WTC11 (cell line): ENCODE measurements at regions of chr17 and their contacts with region 1.

Region 1: GRCh38 chr17:32909787-32910369 is 18.1 kb upstream of the TMEM98 start:
- DNase-seq: peak; percentile 79
- ATAC-seq: peak; percentile 87
- H3K4me3 Mint-ChIP-seq: no peak overlapping the region
- H3K27ac Mint-ChIP-seq: no peak overlapping the region
- H3K4me1 Mint-ChIP-seq: peaks cover 18% of the 10 kb centered on the region
- H3K27me3 Mint-ChIP-seq: no peaks in the 10 kb centered on the region; the same call in 1 of the 2 replicates
- CTCF ChIP-seq: peak; percentile 67; the same call in 1 of the 2 replicates

Region 2: GRCh38 chr17:32794533-32795246 is 115.2 kb before region 1 on chr17:
- CTCF ChIA-PET with region 1: interaction called, 13 read pairs
- POLR2A ChIA-PET with region 1: no interaction called
- DNase-seq: no peak
- ATAC-seq: peak; percentile 71
- H3K4me3 Mint-ChIP-seq: no peak overlapping the region
- H3K27ac Mint-ChIP-seq: no peak overlapping the region
- H3K4me1 Mint-ChIP-seq: peaks cover 18% of the 10 kb centered on the region
- H3K27me3 Mint-ChIP-seq: no peaks in the 10 kb centered on the region
- CTCF ChIP-seq: no peak

Region 3: DNA sequence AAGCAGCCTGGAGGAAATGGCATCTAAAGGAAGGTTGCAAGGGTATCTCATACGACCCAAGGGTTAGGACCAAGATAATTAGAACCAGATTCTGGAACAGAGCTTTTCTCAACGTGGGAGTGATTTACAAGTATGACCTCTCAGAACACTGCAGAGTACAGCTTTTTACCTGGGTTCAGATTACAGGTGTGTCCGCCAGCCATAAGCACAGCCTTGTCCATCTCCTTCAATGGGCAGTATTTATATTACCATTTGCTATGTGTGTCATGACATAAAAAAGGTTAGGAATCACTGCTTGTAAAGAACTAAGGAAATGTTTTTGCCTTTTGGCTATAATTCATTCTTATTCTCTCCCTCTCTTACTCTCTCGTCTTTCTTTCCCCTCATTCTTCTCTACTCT is 69.6 kb before region 1 on chr17:
- CTCF ChIA-PET with region 1: no interaction called
- POLR2A ChIA-PET with region 1: no interaction called
- DNase-seq: no peak
- ATAC-seq: no peak
- H3K4me3 Mint-ChIP-seq: no peak overlapping the region
- H3K27ac Mint-ChIP-seq: no peak overlapping the region
- H3K4me1 Mint-ChIP-seq: peaks cover 12% of the 10 kb centered on the region
- H3K27me3 Mint-ChIP-seq: no peaks in the 10 kb centered on the region
- CTCF ChIP-seq: no peak

Region 4: GRCh38 chr17:32936894-32937500 is 27.1 kb after region 1 on chr17:
- CTCF ChIA-PET with region 1: interaction called, 16 read pairs
- POLR2A ChIA-PET with region 1: no interaction called
- DNase-seq: peak; percentile 92
- ATAC-seq: peak; percentile 95
- H3K4me3 Mint-ChIP-seq: no peak overlapping the region
- H3K27ac Mint-ChIP-seq: peak overlapping the region; percentile 93
- H3K4me1 Mint-ChIP-seq: peaks cover 22% of the 10 kb centered on the region
- H3K27me3 Mint-ChIP-seq: no peaks in the 10 kb centered on the region
- CTCF ChIP-seq: peak; percentile 85